Kidney (tissue), 22 donors: ENCODE measurements at regions of chr1 and their contacts with region 1.

Region 1: DNA sequence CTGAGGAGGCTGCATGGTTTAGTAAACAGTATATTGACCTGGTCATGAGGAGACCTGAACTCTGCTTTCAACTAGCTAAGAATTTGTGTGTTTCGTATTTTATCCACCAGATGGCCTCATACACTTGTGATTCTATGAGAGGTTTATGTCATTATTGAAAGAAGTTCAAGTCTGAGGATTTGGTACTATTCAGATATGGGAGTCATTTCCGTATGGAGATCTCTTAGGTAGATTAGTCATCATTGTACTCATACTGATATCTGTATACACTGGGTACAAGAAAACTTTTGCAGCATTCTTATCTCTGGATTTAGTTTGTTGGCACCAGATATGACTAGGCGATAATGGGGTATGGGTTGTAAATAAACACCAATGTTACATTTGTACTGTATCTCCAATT is 26.6 kb downstream of the ATF6 start:
- DNase-seq: peak in 2 of 5 donors; percentile 75 to 76
- H3K4me3 ChIP-seq: no peak overlapping the region
- H3K27ac ChIP-seq: no peak overlapping the region
- H3K4me1 ChIP-seq: no peaks in the 10 kb centered on the region
- H3K27me3 ChIP-seq: no peaks in the 10 kb centered on the region
- CTCF ChIP-seq: peak; percentile 45

Region 2: DNA sequence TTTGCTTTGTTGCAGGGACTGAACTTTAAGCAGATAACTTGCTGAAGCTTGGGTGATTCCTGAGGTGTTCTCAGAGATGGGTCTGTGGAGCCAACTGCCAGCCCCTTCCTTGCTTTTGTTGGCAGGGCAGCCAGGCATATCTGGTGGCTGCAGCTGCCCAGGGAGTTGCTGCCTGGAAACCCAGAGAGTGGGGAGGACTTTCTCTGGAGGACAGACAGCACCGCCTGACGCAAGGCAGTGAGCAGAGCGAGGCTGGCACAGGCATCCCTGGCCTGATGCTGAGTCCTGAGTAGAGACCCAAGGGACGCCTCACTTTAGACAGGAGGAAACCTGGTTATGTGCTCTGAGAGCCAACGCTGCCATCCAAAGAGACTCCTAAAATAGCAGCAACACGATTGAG is 240.7 kb after region 1 on chr1:
- intact Hi-C with region 1: loop called (anchors 5 kb)
- DNase-seq: peak in 3 of 5 donors; percentile 32 to 42 (median 42)
- H3K4me3 ChIP-seq: no peak overlapping the region
- H3K27ac ChIP-seq: no peak overlapping the region
- H3K4me1 ChIP-seq: no peaks in the 10 kb centered on the region
- H3K27me3 ChIP-seq: no peaks in the 10 kb centered on the region
- CTCF ChIP-seq: no peak